HepG2 (cell line): ENCODE measurements at regions of chr6 and their contacts with region 1.

Region 1: DNA sequence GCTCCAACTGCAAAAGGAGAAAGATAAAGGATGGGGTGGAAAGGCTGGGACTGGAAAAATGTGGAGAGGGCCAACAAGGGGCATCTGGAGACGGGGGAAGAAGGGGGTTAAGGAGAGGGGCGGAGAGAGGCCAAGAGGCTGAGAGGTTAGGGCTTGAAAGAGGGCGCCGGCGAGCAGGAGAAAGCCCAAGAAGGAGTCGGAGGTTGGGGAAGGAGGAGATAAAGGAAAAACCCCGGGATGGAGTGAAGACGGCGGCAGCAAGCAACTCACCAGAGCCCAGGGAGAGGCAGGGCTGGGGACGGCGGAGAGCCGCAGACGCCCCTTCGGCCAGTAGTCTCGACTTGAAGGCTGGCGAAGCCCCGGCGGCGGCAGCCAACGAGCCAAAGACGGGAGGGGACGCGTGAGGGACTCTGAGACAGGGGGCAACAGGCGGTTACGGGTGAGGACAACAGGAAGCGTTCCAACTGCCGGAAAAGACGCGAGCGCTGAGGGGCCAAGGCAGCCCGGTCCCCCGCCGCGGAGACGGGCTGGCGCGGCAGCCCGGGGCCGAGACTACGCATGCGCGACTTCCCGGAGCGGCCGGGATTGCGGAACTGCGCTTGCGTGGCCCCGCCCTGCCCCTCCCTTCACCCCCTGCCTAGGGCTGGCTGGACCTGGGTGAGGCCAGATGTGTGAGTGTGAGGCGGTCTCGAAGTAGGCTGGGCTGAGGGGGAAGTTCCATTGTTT is at the start of gene STK38:
- DNase-seq: peak; percentile 84
- ATAC-seq: peak; percentile 93
- H3K4me3 ChIP-seq: peak within 1 kb of the TSS; percentile 85 to 100 (median 88)
- H3K27ac ChIP-seq: peak within 1 kb of the TSS; percentile 71
- H3K4me1 ChIP-seq: peaks cover 43% of the 10 kb centered on the region
- H3K27me3 ChIP-seq: peaks cover 0 to 1% of the 10 kb centered on the region in 2 experiments; a peak in 3 of 5 replicates
- CTCF ChIP-seq: peak; percentile 58
- EP300 ChIP-seq: no peak
- POLR2A ChIP-seq: peak; percentile 88 to 99
- RAD21 ChIP-seq: 0 out of 2 replicates have a peak, but pooled peaks have one; percentile 16
- total RNA-seq, gene STK38: 20.7 and 25.5 TPM in 2 replicates

Region 2: GRCh38 chr6:36423101-36423824 is 123.8 kb before region 1 on chr6:
- CTCF ChIA-PET with region 1: no interaction called
- POLR2A ChIA-PET with region 1: no interaction called
- in situ Hi-C with region 1: no loop called
- intact Hi-C with region 1: loop called (anchors 1 kb)
- DNase-seq: peak; percentile 98
- ATAC-seq: peak; percentile 94
- H3K4me3 ChIP-seq: peak overlapping the region; percentile 64 to 72 (median 71)
- H3K27ac ChIP-seq: peak overlapping the region; percentile 62
- H3K4me1 ChIP-seq: peaks cover 41% of the 10 kb centered on the region
- H3K27me3 ChIP-seq: peaks cover 0 to 4% of the 10 kb centered on the region in 2 experiments; a peak in 1 of 5 replicates
- CTCF ChIP-seq: peak; percentile 98
- EP300 ChIP-seq: no peak
- POLR2A ChIP-seq: peak; percentile 43 to 75; a peak in 3 of 4 replicates
- RAD21 ChIP-seq: peak; percentile 92